ENCODE measurements at regions of chr15 and their contacts with region 1.

Region 1: DNA sequence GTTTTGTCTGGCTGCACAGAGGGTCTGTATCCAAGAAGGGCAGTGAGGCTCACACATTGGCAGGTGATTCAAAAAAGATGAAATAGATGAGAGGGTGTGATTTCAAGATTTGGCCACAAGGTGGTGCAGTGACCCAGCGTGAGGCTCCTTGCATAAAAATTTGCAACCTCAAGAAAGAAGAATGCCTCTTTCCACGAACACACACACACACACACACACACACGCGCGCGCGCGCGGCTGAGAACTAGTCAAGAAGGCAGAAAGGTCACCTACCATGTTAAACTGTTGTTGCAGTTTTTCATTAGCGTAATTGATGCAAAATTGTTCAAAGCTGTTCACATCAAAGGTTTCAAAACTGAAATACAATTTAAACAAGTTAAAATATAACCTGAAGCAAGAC is 39.2 kb downstream of the MYO5C start:
- DNase-seq: peak; percentile 84
- H3K4me3 ChIP-seq: peak overlapping the region; percentile 44
- H3K27ac ChIP-seq: no peak overlapping the region
- H3K4me1 ChIP-seq: peaks cover 25% of the 10 kb centered on the region
- CTCF ChIP-seq: peak; percentile 88

Region 2: DNA sequence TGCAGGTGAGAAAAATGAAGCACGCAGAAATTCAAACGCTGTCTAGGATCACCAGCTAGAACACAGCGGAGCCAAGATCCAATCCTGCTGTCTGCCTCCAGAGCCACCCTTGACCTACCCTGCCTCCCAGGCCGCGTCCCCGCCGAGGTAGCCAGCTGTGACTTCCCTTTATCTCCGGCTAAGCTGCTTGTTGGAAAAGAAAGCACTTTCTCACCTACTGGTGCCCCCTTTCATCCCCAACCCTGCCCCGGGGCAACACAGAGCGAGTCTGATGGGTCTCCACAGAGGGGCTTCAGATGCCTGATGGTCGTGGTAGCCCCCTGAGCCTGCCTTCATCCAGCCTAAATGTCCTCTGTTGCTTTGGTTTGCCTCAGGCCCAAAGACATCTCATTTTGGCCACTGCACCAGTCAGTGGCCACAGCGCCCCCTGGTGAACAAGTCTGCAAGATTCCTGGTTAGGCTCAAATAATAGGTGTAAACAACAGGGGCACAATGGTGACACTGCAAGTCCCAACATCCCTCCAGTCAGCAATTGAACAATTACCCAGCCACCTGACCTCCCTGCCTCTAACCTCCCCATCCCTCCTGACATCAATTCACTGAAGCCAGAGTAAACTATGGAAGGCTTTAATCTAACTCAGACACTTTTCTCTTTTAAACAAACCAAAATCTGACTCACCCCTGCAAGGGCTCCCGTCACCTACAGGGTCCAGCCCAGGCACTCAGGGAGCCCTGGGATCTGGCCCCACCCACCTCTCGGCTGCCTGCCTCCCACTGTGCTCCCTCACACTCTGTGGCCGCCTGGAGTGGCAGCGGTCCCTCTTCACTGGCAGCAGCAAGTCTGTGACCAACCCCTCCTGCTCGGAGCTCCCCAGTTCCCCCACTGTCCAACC is 116.5 kb before region 1 on chr15:
- CTCF ChIA-PET with region 1: no interaction called
- POLR2A ChIA-PET with region 1: no interaction called
- intact Hi-C with region 1: no loop called
- DNase-seq: peak; percentile 70
- H3K4me3 ChIP-seq: no peak overlapping the region
- H3K27ac ChIP-seq: no peak overlapping the region
- H3K4me1 ChIP-seq: no peaks in the 10 kb centered on the region
- CTCF ChIP-seq: peak; percentile 96

Region 3: GRCh38 chr15:52179278-52180195 is 76.8 kb before region 1 on chr15:
- CTCF ChIA-PET with region 1: no interaction called
- POLR2A ChIA-PET with region 1: interaction called, 5 read pairs
- intact Hi-C with region 1: loop called (anchors 1 kb)
- DNase-seq: peak; percentile 90
- H3K4me3 ChIP-seq: peak overlapping the region; percentile 85
- H3K27ac ChIP-seq: peak overlapping the region; percentile 81
- H3K4me1 ChIP-seq: peaks cover 65% of the 10 kb centered on the region
- CTCF ChIP-seq: no peak

Region 4: DNA sequence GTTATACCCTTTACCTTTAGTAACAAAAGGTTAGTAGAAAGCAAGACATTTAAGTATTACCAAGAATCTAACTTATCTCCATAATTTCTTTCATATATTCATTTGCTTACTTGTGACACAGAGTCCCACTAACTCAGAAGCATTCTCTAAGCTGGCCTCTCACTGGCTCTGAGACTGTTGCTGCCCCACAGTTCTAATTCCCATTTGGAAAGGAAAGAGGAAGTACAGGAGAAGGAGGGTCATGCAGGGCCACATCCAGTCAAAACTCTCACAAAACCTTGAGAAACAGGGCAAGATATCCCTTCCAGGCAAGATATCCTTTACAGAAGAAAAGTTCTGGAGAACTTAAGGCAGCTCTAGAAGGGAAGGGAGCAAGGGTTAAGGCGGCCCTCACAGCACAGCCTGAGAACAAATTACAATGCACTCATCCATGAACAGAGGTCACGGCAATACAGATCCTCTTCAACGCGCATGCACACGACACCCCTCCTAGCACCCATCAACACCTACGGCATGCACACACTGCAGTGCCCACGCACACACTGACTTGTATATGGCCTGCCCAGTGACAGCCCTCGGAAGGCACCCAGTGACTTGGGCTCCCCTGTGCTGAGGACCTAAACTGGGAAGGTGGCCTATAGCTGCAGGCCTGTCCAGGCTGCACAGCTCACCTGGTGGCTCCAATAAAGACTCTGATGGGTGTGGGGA is 52.2 kb after region 1 on chr15:
- CTCF ChIA-PET with region 1: interaction called, 3 read pairs
- POLR2A ChIA-PET with region 1: no interaction called
- intact Hi-C with region 1: loop called (anchors 1 kb)
- DNase-seq: no peak
- H3K4me3 ChIP-seq: no peak overlapping the region
- H3K27ac ChIP-seq: peak overlapping the region; percentile 15
- H3K4me1 ChIP-seq: peaks cover 22% of the 10 kb centered on the region
- CTCF ChIP-seq: no peak

Region 5: DNA sequence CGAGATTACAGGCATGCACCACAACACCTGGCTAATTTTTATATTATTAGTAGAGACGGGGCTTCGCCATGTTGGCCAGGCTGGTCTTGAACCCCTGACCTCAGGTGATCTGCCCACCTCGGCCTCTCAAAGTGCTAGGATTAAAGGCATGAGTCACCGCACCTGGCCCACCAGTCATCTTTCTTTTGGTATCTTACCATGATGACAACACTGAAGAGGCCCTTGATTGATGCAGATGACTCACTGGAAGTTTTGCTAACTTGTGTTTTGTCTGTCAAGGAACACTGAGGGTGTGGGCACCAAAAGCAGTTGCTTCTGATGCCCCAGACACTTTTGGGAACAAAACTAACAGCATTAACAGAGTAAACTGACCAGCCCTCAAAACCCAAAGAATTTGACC is 184.0 kb after region 1 on chr15:
- CTCF ChIA-PET with region 1: no interaction called
- POLR2A ChIA-PET with region 1: no interaction called
- intact Hi-C with region 1: no loop called
- DNase-seq: no peak
- H3K4me3 ChIP-seq: no peak overlapping the region
- H3K27ac ChIP-seq: no peak overlapping the region
- H3K4me1 ChIP-seq: no peaks in the 10 kb centered on the region
- CTCF ChIP-seq: no peak

Region 6: DNA sequence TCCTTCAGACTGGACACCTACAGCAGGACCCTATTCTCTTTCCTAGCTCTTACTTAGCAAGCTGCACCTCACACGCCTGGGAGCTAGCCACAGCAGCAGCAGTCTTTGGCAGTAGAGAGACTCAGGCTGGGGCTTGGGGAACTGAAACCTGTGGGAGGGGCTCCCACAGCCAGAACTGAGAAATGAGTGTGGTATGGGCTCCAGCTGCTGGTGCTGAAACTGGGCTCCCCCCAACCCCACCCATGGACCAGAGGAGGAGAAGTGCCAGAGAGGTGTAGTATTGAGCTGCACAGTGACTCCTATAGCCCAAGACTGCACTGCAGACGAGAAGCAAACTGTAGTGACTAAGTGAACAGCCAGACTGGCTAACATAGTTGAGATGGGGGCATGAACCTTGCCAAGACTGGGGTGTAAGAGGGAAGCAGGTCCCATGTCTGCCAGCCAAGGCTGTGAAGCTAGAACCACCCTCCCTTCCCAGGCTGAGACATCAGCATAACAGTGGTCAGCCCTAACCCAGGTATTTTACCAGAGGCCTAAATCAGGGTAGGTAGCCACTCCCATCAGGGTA is 209.9 kb after region 1 on chr15:
- CTCF ChIA-PET with region 1: no interaction called
- POLR2A ChIA-PET with region 1: no interaction called
- intact Hi-C with region 1: loop called (anchors 2 kb)
- DNase-seq: peak; percentile 97
- H3K4me3 ChIP-seq: peak overlapping the region; percentile 51
- H3K27ac ChIP-seq: peak overlapping the region; percentile 81
- H3K4me1 ChIP-seq: peaks cover 53% of the 10 kb centered on the region
- CTCF ChIP-seq: peak; percentile 78

Region 7: GRCh38 chr15:52568601-52569256 is 312.4 kb after region 1 on chr15 and contains the start of gene ARPP19:
- CTCF ChIA-PET with region 1: no interaction called
- POLR2A ChIA-PET with region 1: no interaction called
- intact Hi-C with region 1: loop called (anchors 1 kb)
- DNase-seq: peak; percentile 90
- H3K4me3 ChIP-seq: peak within 1 kb of the TSS; percentile 85
- H3K27ac ChIP-seq: peak within 1 kb of the TSS; percentile 75
- H3K4me1 ChIP-seq: peaks cover 30% of the 10 kb centered on the region
- CTCF ChIP-seq: peak; percentile 58
- total RNA-seq, gene ARPP19: 48.0 and 68.3 TPM in 2 replicates

Region 8: DNA sequence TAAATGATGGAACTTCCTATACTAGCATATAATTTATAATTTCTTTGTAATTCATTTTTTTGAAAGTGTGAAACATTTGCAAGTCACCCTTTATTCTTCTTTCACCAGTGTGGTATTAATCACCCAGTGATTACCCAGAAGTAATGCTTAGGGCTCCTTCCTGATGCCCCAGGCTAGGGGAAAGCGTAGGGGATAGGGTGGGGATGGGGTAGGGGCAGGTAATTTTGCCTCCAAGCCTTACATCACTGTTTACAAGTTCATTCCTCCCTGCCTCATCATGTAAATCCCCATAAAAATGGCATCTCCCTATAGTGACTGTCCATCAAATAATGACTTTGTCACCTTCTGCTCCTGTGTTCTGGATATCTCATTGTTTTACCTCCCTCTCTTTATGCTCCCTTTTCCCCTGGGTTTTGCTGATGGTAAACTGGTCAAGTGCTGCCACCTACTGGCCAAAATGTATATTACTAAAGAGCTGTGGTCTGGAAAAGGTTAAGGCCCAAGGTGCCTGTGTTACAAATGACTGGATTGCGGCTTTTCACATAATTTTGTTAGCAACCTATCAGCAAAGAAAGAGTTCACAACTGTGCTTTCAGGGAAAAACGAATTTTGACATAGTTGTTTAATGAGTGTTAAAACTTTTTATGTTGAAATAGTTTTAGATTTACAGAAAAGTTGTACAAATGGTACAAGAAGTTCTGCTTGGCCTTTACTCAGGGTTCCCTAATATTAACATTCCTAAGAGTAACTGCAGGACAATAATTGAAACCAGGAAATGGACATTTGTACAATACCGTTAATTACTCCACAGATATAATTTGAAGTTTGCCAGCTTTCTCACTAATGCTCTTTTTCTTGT is 479.1 kb after region 1 on chr15:
- CTCF ChIA-PET with region 1: interaction called, 10 read pairs
- POLR2A ChIA-PET with region 1: interaction called, 7 read pairs
- intact Hi-C with region 1: loop called (anchors 1 kb)
- DNase-seq: peak; percentile 86
- H3K4me3 ChIP-seq: no peak overlapping the region
- H3K27ac ChIP-seq: no peak overlapping the region
- H3K4me1 ChIP-seq: peaks cover 31% of the 10 kb centered on the region
- CTCF ChIP-seq: peak; percentile 98

Measured in OCI-LY7 (cell line).